ENCODE measurements at regions of chr21 and their contacts with region 1.

Region 1: DNA sequence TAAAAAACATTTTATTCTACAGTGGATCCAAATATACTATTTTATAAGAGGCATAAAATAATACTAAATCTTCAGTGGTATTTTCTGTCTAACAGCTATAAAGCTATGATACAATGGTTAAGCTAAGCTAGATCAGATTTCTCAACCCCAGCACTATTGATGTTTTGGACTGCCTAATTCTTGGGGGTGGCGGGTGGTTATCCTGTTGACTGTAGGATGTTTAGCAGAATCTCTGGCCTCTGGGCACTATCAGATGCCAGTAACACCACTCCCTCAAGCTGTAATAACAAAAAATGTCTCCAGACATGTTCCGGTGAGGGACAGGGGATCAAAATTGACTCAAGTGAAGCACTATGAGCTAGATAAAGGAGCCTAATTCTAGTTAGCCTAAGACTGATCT is 118.5 kb downstream of the APP start:
- DNase-seq: no peak
- ATAC-seq: no peak
- H3K4me3 ChIP-seq: no peak overlapping the region
- H3K27ac ChIP-seq: no peak overlapping the region
- H3K4me1 ChIP-seq: no peaks in the 10 kb centered on the region
- H3K27me3 ChIP-seq: no peaks in the 10 kb centered on the region
- CTCF ChIP-seq: no peak

Region 2: DNA sequence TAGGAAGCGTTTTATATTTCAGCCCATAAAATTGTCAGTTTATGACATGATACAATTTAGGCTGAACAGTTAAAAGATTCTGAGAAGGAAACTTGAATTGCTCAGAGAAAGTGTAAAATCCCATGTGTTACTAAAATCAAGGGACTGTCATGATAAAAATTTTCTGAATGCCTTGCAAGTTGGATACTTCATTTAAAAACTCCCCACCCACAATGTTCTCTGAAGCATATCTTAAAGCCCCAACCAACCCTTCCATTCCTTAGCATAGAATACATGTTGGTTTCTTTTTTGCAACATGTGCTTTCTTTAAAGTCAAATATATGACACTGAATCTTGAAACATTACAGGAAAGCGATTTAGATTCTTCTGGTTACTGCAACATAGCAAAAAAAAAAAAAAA is 542.2 kb before region 1 on chr21:
- intact Hi-C with region 1: no loop called
- DNase-seq: no peak
- ATAC-seq: no peak
- H3K4me3 ChIP-seq: no peak overlapping the region
- H3K27ac ChIP-seq: no peak overlapping the region
- H3K4me1 ChIP-seq: no peaks in the 10 kb centered on the region
- H3K27me3 ChIP-seq: no peaks in the 10 kb centered on the region
- CTCF ChIP-seq: no peak

Region 3: DNA sequence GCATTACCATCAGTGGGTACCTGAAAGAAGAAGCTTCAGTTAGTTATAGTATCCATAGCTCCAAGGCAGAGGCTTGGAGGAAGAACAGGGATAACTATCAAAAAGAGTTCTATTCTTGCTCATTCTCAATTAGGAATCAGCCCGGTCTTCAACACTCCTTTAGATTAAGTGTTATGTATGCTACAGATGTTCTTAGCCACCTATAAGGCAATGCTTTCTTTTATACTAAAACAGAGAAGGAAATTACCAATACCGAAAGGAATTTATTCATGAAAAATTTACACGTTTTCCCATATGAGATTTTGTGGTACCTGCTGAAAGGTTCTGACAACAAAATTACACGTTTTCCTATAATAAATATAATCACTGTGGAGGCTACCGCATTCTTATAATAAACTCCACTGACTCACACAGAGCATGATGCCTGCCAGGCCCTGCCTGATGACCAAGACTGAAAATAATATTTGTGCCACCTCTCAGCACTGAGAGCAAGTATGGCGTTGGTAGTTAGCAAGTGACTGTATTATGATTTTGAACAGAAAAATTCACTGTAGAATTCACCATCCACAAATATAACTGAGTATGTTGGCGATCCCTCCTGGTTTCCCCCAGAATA is 60.2 kb after region 1 on chr21:
- intact Hi-C with region 1: loop called in 1 of 2 experiments (anchors 2 kb)
- DNase-seq: no peak
- ATAC-seq: no peak
- H3K4me3 ChIP-seq: no peak overlapping the region
- H3K27ac ChIP-seq: no peak overlapping the region
- H3K4me1 ChIP-seq: no peaks in the 10 kb centered on the region
- H3K27me3 ChIP-seq: no peaks in the 10 kb centered on the region
- CTCF ChIP-seq: no peak

Measured in psoas muscle (tissue), 8 donors.